ENCODE measurements at regions of chr7 and their contacts with region 1.

Region 1: GRCh38 chr7:151232091-151232916 is at the start of gene CHPF2:
- DNase-seq: peak; percentile 87 to 94 (median 91)
- H3K4me3 ChIP-seq: peak within 1 kb of the TSS; percentile 65 to 95 (median 85)
- H3K4me3 Mint-ChIP-seq: peak within 1 kb of the TSS; percentile 100
- H3K27ac ChIP-seq: peak within 1 kb of the TSS; percentile 78 to 93
- H3K27ac Mint-ChIP-seq: peak within 1 kb of the TSS; percentile 95 to 99 (median 98)
- H3K4me1 ChIP-seq: peaks cover 26 to 32% of the 10 kb centered on the region in 2 donors
- H3K4me1 Mint-ChIP-seq: peaks cover 31% of the 10 kb centered on the region
- H3K27me3 ChIP-seq: no peaks in the 10 kb centered on the region
- H3K27me3 Mint-ChIP-seq: peaks cover 2 to 3% (median 3%) of the 10 kb centered on the region in 3 donors
- CTCF ChIP-seq: no peak
- polyA plus RNA-seq, gene CHPF2: 34.4 to 38.0 (median 36.0) TPM

Region 2: GRCh38 chr7:151271699-151272355 is 39.5 kb after region 1 on chr7:
- intact Hi-C with region 1: loop called in 1 of 2 experiments (anchors 5 kb)
- DNase-seq: peak; percentile 94 to 99 (median 98)
- H3K4me3 ChIP-seq: peak overlapping the region in 1 of 3 experiments; percentile 79
- H3K4me3 Mint-ChIP-seq: peak overlapping the region; percentile 9 to 68
- H3K27ac ChIP-seq: peak overlapping the region; percentile 86 to 92
- H3K27ac Mint-ChIP-seq: peak overlapping the region; percentile 91 to 99 (median 95)
- H3K4me1 ChIP-seq: peaks cover 61 to 63% of the 10 kb centered on the region in 2 donors
- H3K4me1 Mint-ChIP-seq: peaks cover 72% of the 10 kb centered on the region
- H3K27me3 ChIP-seq: no peaks in the 10 kb centered on the region
- H3K27me3 Mint-ChIP-seq: peaks cover 2 to 6% (median 3%) of the 10 kb centered on the region in 3 donors
- CTCF ChIP-seq: peak; percentile 14